Posterior vena cava (tissue), 2 donors: ENCODE measurements at regions of chr1 and their contacts with region 1.

Region 1: DNA sequence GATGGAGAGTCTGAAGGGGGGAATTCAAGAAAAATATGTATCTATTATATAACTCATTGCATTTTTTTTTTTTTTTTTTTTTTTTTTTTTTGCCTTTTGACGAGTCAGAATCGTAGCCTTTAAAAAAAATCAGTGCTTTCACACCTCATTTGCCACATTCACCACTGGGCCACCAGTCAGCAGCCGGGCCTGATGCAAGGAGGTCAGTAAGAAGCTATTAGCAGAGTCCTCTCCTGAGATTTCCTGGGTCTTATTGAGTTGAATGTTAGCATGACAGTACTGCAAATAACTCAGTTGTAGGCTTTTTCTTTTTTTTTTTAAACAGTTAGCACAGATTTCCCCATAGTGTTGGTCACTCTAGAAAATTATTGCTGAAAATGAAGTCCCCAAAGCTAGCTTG is 139.8 kb downstream of the SPATA17 start:
- DNase-seq: no peak

Region 2: GRCh38 chr1:216566641-216567205 is 1204.2 kb before region 1 on chr1:
- intact Hi-C with region 1: loop called in 1 of 2 experiments (anchors 5 kb)
- DNase-seq: no peak